ENCODE measurements at regions of chr15 and their contacts with region 1.

Region 1: GRCh38 chr15:67065444-67066093 is at the start of gene SMAD3:
- DNase-seq: peak; percentile 92 to 93
- H3K4me3 ChIP-seq: peak within 1 kb of the TSS; percentile 89
- H3K4me3 Mint-ChIP-seq: peak within 1 kb of the TSS; percentile 96
- H3K27ac Mint-ChIP-seq: peak within 1 kb of the TSS; percentile 88
- H3K4me1 ChIP-seq: peaks cover 47% of the 10 kb centered on the region
- H3K4me1 Mint-ChIP-seq: peaks cover 39% of the 10 kb centered on the region
- H3K27me3 ChIP-seq: no peaks in the 10 kb centered on the region
- H3K27me3 Mint-ChIP-seq: no peaks in the 10 kb centered on the region
- CTCF ChIP-seq: no peak
- total RNA-seq, gene SMAD3: 51.5 and 54.8 TPM in 2 replicates

Region 2: GRCh38 chr15:66830358-66830757 is 235.2 kb before region 1 on chr15:
- CTCF ChIA-PET with region 1: no interaction called
- POLR2A ChIA-PET with region 1: no interaction called
- intact Hi-C with region 1: no loop called
- DNase-seq: no peak
- H3K4me3 ChIP-seq: no peak overlapping the region
- H3K4me3 Mint-ChIP-seq: no peak overlapping the region
- H3K27ac Mint-ChIP-seq: no peak overlapping the region
- H3K4me1 ChIP-seq: peaks cover 12% of the 10 kb centered on the region
- H3K4me1 Mint-ChIP-seq: peaks cover 6% of the 10 kb centered on the region
- H3K27me3 ChIP-seq: no peaks in the 10 kb centered on the region
- H3K27me3 Mint-ChIP-seq: no peaks in the 10 kb centered on the region
- CTCF ChIP-seq: no peak

Region 3: GRCh38 chr15:66877477-66878271 is 187.9 kb before region 1 on chr15:
- CTCF ChIA-PET with region 1: no interaction called
- POLR2A ChIA-PET with region 1: no interaction called
- intact Hi-C with region 1: no loop called
- DNase-seq: no peak
- H3K4me3 ChIP-seq: no peak overlapping the region
- H3K4me3 Mint-ChIP-seq: no peak overlapping the region
- H3K27ac Mint-ChIP-seq: no peak overlapping the region
- H3K4me1 ChIP-seq: peaks cover under 1% of the 10 kb centered on the region
- H3K4me1 Mint-ChIP-seq: peaks cover 7% of the 10 kb centered on the region
- H3K27me3 ChIP-seq: no peaks in the 10 kb centered on the region
- H3K27me3 Mint-ChIP-seq: no peaks in the 10 kb centered on the region
- CTCF ChIP-seq: no peak

Region 4: DNA sequence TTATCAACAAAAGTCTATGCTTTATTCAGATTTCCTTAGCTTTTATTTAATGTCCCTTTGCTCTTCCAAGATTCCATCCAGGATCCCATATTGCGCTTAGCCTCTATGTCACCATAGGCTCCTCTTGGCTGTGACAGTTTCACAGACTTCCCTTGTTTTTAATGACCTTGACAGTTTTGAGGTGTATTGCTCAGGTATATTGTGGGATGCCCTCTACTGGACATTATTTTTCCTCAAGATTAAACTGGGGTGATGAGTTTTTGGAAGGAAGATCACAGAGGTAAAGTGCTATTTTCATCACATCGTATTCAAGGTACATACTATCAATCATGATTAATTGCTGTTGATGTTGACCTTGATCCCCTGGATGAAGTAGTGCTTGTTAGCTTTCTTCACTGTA is 99.3 kb before region 1 on chr15:
- CTCF ChIA-PET with region 1: interaction called, 3 read pairs
- POLR2A ChIA-PET with region 1: no interaction called
- intact Hi-C with region 1: loop called (anchors 5 kb)
- DNase-seq: no peak
- H3K4me3 ChIP-seq: no peak overlapping the region
- H3K4me3 Mint-ChIP-seq: no peak overlapping the region
- H3K27ac Mint-ChIP-seq: no peak overlapping the region
- H3K4me1 ChIP-seq: no peaks in the 10 kb centered on the region
- H3K4me1 Mint-ChIP-seq: no peaks in the 10 kb centered on the region
- H3K27me3 ChIP-seq: no peaks in the 10 kb centered on the region
- H3K27me3 Mint-ChIP-seq: no peaks in the 10 kb centered on the region
- CTCF ChIP-seq: peak in 1 of 2 experiments; percentile 25

Region 5: DNA sequence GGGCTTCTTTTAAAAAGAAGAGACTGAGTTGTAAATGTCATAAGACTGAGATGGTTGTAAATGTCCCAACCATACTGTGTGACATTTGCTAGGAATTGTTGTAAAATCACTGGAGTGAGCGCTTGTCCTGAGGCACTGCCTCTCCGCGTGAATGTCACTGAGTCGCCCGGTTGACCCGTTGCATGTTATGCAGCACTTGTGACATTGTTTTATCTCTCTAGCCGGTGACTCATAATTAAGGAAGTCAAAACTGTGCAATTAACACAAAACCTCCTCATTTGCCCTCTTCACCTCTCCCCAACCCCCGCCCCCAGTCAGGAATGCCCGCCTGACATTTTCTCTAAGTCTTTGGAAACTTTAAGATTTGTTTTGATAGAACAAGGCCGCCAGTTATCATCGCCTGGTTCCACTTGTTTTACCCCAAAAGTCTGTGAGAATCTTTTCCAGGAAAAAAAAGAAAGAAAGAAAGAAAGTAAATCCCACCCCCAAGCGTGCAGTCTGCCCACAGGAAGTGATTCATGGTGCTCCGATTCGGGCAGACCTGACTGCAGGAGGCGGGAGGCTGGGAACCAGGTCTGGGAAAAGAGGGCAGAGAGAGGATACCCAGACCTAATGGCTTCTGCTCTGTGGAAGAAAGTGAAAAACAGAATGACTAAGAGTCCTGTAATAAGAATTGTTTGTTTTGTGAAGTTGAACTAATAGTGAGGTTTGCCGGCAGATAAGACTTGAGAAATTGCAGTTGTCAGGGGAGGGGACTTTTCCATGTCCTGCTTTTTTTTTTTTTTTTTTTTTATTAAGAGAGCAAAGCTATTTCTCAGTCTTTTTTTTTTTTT is 84.7 kb after region 1 on chr15:
- CTCF ChIA-PET with region 1: no interaction called
- POLR2A ChIA-PET with region 1: interaction called, 7 read pairs
- intact Hi-C with region 1: loop called (anchors 2 kb)
- DNase-seq: peak; percentile 71 to 81
- H3K4me3 ChIP-seq: peak overlapping the region; percentile 17
- H3K4me3 Mint-ChIP-seq: peak overlapping the region; percentile 72
- H3K27ac Mint-ChIP-seq: peak overlapping the region; percentile 78
- H3K4me1 ChIP-seq: peaks cover 62% of the 10 kb centered on the region
- H3K4me1 Mint-ChIP-seq: peaks cover 41% of the 10 kb centered on the region
- H3K27me3 ChIP-seq: no peaks in the 10 kb centered on the region
- H3K27me3 Mint-ChIP-seq: no peaks in the 10 kb centered on the region
- CTCF ChIP-seq: no peak

Region 6: GRCh38 chr15:67199881-67200763 is 134.6 kb after region 1 on chr15:
- CTCF ChIA-PET with region 1: no interaction called
- POLR2A ChIA-PET with region 1: no interaction called
- intact Hi-C with region 1: loop called (anchors 5 kb)
- DNase-seq: no peak
- H3K4me3 ChIP-seq: no peak overlapping the region
- H3K4me3 Mint-ChIP-seq: no peak overlapping the region
- H3K27ac Mint-ChIP-seq: no peak overlapping the region
- H3K4me1 ChIP-seq: peaks cover 16% of the 10 kb centered on the region
- H3K4me1 Mint-ChIP-seq: no peaks in the 10 kb centered on the region
- H3K27me3 ChIP-seq: no peaks in the 10 kb centered on the region
- H3K27me3 Mint-ChIP-seq: no peaks in the 10 kb centered on the region
- CTCF ChIP-seq: no peak

Measured in Caco-2 (cell line).